Naive thymus-derived CD4-positive, alpha-beta T cell (primary cell): ENCODE measurements at regions of chr10 and their contacts with region 1.

Region 1: GRCh38 chr10:103918053-103918846 is at the start of gene STN1:
- DNase-seq: peak; percentile 81 to 95 (median 94)
- ATAC-seq: peak; percentile 97
- H3K4me3 ChIP-seq: peak within 1 kb of the TSS; percentile 89
- H3K4me3 Mint-ChIP-seq: peak within 1 kb of the TSS; percentile 88 to 99 (median 97)
- H3K27ac ChIP-seq: peak within 1 kb of the TSS; percentile 79
- H3K27ac Mint-ChIP-seq: peak within 1 kb of the TSS; percentile 95 to 99 (median 97)
- H3K4me1 ChIP-seq: peaks cover 28 to 31% of the 10 kb centered on the region in 2 donors
- H3K4me1 Mint-ChIP-seq: peaks cover 15 to 44% (median 38%) of the 10 kb centered on the region in 7 donors
- H3K27me3 ChIP-seq: no peaks in the 10 kb centered on the region
- H3K27me3 Mint-ChIP-seq: no peaks in the 10 kb centered on the region
- total RNA-seq, gene STN1: 28.8 to 42.6 (median 34.8) TPM

Region 2: GRCh38 chr10:103901299-103901698 is 17.0 kb before region 1 on chr10:
- CTCF ChIA-PET with region 1: interaction called, 18 read pairs
- POLR2A ChIA-PET with region 1: interaction called, 26 read pairs
- intact Hi-C with region 1: loop called (anchors 1 to 2 kb)
- DNase-seq: peak in 1 of 9 donors; percentile 20
- ATAC-seq: peak; percentile 65
- H3K4me3 ChIP-seq: no peak overlapping the region
- H3K4me3 Mint-ChIP-seq: peak overlapping the region; percentile 25 to 76 (median 60)
- H3K27ac ChIP-seq: peak overlapping the region; percentile 14
- H3K27ac Mint-ChIP-seq: peak overlapping the region in 8 of 9 donors; percentile 38 to 80 (median 65)
- H3K4me1 ChIP-seq: peaks cover 14 to 38% of the 10 kb centered on the region in 2 donors
- H3K4me1 Mint-ChIP-seq: peaks cover 12 to 58% (median 51%) of the 10 kb centered on the region in 7 donors
- H3K27me3 ChIP-seq: no peaks in the 10 kb centered on the region
- H3K27me3 Mint-ChIP-seq: no peaks in the 10 kb centered on the region

Region 3: GRCh38 chr10:104231784-104232612 is 313.7 kb after region 1 on chr10 and contains the start of gene CFAP43:
- CTCF ChIA-PET with region 1: no interaction called
- POLR2A ChIA-PET with region 1: no interaction called
- intact Hi-C with region 1: loop called (anchors 1 to 10 kb)
- DNase-seq: peak; percentile 99 to 100 (median 99)
- ATAC-seq: peak; percentile 100
- H3K4me3 ChIP-seq: peak within 1 kb of the TSS; percentile 74
- H3K4me3 Mint-ChIP-seq: peak within 1 kb of the TSS; percentile 84 to 95 (median 91)
- H3K27ac ChIP-seq: peak within 1 kb of the TSS; percentile 44
- H3K27ac Mint-ChIP-seq: peak within 1 kb of the TSS; percentile 63 to 95 (median 86)
- H3K4me1 ChIP-seq: peaks cover 0 to 6% of the 10 kb centered on the region in 2 donors
- H3K4me1 Mint-ChIP-seq: peaks cover 6 to 18% (median 13%) of the 10 kb centered on the region in 7 donors
- H3K27me3 ChIP-seq: peaks cover 0 to 7% of the 10 kb centered on the region in 2 donors
- H3K27me3 Mint-ChIP-seq: peaks cover 10 to 58% (median 19%) of the 10 kb centered on the region in 5 donors
- total RNA-seq, gene CFAP43: 0.17 TPM in 1 of 5 experiments, not detected in the others

Region 4: GRCh38 chr10:104328896-104329710 is 410.9 kb after region 1 on chr10:
- CTCF ChIA-PET with region 1: no interaction called
- POLR2A ChIA-PET with region 1: no interaction called
- intact Hi-C with region 1: loop called in 1 of 2 experiments (anchors 5 kb)
- DNase-seq: peak in 8 of 9 donors; percentile 71 to 95 (median 80)
- ATAC-seq: peak; percentile 64
- H3K4me3 ChIP-seq: peak overlapping the region; percentile 51
- H3K4me3 Mint-ChIP-seq: peak overlapping the region; percentile 76 to 93 (median 86)
- H3K27ac ChIP-seq: peak overlapping the region; percentile 78
- H3K27ac Mint-ChIP-seq: peak overlapping the region; percentile 87 to 97 (median 94)
- H3K4me1 ChIP-seq: peaks cover 64 to 97% of the 10 kb centered on the region in 2 donors
- H3K4me1 Mint-ChIP-seq: peaks cover 80 to 100% (median 99%) of the 10 kb centered on the region in 7 donors
- H3K27me3 ChIP-seq: no peaks in the 10 kb centered on the region
- H3K27me3 Mint-ChIP-seq: no peaks in the 10 kb centered on the region